ENCODE measurements at regions of chr13 and their contacts with region 1.

Region 1: GRCh38 chr13:26929971-26930730 is 169.6 kb upstream of the GPR12 start:
- DNase-seq: peak; percentile 47 to 88 (median 68)
- ATAC-seq: peak; percentile 93
- H3K4me3 ChIP-seq: no peak overlapping the region
- H3K27ac ChIP-seq: no peak overlapping the region
- H3K4me1 ChIP-seq: peaks cover 0 to 5% of the 10 kb centered on the region in 2 donors
- H3K27me3 ChIP-seq: peaks cover 0 to 11% of the 10 kb centered on the region in 2 donors
- CTCF ChIP-seq: peak; percentile 92 to 98

Region 2: DNA sequence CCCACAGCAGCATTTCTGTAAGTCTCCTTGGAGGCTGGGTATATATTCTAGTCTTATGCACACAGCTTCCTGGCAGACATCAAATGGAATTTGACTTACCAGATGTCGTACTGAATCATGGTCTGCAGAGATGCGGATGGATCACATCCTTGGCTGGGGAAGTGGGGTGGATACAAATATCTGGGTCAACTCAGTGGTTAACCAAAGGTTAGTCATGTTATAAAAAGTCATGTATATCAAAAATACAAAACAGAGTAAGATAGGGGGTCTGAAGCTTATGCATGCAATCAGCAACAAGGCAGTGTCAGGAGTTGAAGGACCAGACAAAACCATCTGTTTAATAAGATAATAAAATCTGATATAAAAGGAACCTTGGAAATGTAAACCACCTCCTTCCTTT is 310.8 kb before region 1 on chr13:
- intact Hi-C with region 1: no loop called
- DNase-seq: no peak
- ATAC-seq: no peak
- H3K4me3 ChIP-seq: no peak overlapping the region
- H3K27ac ChIP-seq: no peak overlapping the region
- H3K4me1 ChIP-seq: no peaks in the 10 kb centered on the region
- H3K27me3 ChIP-seq: no peaks in the 10 kb centered on the region
- CTCF ChIP-seq: no peak

Region 3: DNA sequence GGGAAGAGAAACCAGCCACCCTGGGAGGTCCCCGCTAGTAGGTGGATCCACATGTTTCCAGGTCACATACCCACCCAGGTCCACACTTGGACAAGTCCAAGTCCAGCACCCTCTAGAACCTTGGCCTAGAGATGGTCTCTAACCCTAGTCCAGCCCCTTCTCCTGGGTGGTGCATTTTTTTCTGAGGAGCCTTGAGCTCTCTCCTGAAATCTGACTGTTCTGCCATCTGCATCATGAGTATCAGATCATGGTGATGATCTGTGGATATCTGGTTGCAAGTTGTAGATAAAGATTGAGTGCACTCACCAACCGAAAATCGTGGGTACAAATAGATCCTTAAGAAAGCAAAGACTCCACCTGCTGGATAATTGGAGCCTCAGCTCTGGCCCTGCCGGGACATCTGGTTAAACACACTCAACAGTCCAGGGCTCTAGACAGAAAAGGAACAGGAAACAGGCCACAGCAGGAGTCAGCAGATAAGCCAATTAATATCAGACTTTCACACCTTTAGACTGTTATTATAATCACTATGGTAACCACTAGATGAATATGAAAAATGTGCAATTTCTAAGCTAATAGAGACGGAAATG is 210.7 kb before region 1 on chr13:
- intact Hi-C with region 1: loop called in 1 of 2 experiments (anchors 10 kb)
- DNase-seq: no peak
- ATAC-seq: no peak
- H3K4me3 ChIP-seq: no peak overlapping the region
- H3K27ac ChIP-seq: no peak overlapping the region
- H3K4me1 ChIP-seq: peaks cover 0 to 8% of the 10 kb centered on the region in 2 donors
- H3K27me3 ChIP-seq: peaks cover 0 to 8% of the 10 kb centered on the region in 2 donors
- CTCF ChIP-seq: no peak

Region 4: GRCh38 chr13:27079421-27079958 is 149.3 kb after region 1 on chr13:
- intact Hi-C with region 1: no loop called
- DNase-seq: no peak
- ATAC-seq: peak; percentile 36
- H3K4me3 ChIP-seq: no peak overlapping the region
- H3K27ac ChIP-seq: no peak overlapping the region
- H3K4me1 ChIP-seq: peaks cover 6 to 8% of the 10 kb centered on the region in 2 donors
- H3K27me3 ChIP-seq: no peaks in the 10 kb centered on the region
- CTCF ChIP-seq: no peak

Region 5: GRCh38 chr13:27147530-27148170 is 217.5 kb after region 1 on chr13:
- intact Hi-C with region 1: no loop called
- DNase-seq: no peak
- ATAC-seq: no peak
- H3K4me3 ChIP-seq: no peak overlapping the region
- H3K27ac ChIP-seq: no peak overlapping the region
- H3K4me1 ChIP-seq: peaks cover 0 to 6% of the 10 kb centered on the region in 2 donors
- H3K27me3 ChIP-seq: no peaks in the 10 kb centered on the region
- CTCF ChIP-seq: no peak

Region 6: DNA sequence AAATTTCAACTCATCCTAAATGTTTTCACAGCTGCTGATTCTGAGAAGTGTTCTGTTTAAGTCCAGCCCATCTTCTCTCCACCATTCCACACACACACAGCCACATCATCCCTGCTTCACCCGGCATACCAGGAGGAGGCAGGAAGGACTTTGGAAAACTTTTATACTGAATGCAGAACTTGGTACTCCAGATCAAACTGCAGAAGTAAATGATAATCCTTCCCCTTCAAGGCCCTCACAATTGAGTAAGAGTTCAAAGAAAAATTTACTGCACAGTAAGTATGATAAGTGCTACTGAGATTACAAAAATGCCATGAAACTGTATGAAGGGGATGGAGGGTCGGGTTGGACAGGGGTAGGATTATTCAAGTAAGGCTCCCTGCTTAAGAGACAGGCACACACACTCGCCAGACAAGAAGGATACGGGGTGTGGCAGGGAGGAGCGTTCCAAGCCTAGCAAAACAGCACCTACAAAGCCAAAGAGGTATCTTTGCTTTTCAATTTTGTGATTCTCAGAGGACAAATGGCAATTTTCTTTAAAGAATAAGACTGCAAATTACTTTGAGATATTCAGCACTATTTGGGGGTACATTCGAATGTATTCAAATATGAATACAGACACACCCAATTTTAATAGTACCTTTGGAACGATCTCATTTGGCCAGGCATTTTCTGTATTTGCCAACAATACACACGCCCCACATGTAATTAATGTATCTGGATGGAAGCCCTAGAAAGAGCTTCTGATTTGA is 238.9 kb after region 1 on chr13:
- intact Hi-C with region 1: no loop called
- DNase-seq: no peak
- ATAC-seq: no peak
- H3K4me3 ChIP-seq: no peak overlapping the region
- H3K27ac ChIP-seq: peak overlapping the region in 1 of 2 donors; percentile 93
- H3K4me1 ChIP-seq: peaks cover 16 to 71% of the 10 kb centered on the region in 2 donors
- H3K27me3 ChIP-seq: no peaks in the 10 kb centered on the region
- CTCF ChIP-seq: no peak